Activated CD4-positive, alpha-beta T cell treated with anti-CD3 and anti-CD28 coated beads, Interleukin-2, amount 10 ng/mL, durations not matched to agents 24 days and 14 days (primary cell): ENCODE measurements at regions of chr9 and their contacts with region 1.

Region 1: GRCh38 chr9:19127881-19128500 is 699 bp upstream of the PLIN2 start:
- DNase-seq: peak; percentile 80
- H3K4me3 Mint-ChIP-seq: peak overlapping the region; percentile 90
- H3K27ac Mint-ChIP-seq: peak overlapping the region; percentile 95
- H3K4me1 Mint-ChIP-seq: peaks cover 46% of the 10 kb centered on the region
- H3K27me3 Mint-ChIP-seq: no peaks in the 10 kb centered on the region

Region 2: GRCh38 chr9:18985464-18985951 is 142.5 kb before region 1 on chr9:
- intact Hi-C with region 1: no loop called
- DNase-seq: no peak
- H3K4me3 Mint-ChIP-seq: no peak overlapping the region
- H3K27ac Mint-ChIP-seq: no peak overlapping the region
- H3K4me1 Mint-ChIP-seq: no peaks in the 10 kb centered on the region
- H3K27me3 Mint-ChIP-seq: no peaks in the 10 kb centered on the region

Region 3: GRCh38 chr9:19048966-19049916 is 78.8 kb before region 1 on chr9 and contains the start of gene RRAGA:
- intact Hi-C with region 1: loop called (anchors 1 kb)
- DNase-seq: peak; percentile 99
- H3K4me3 Mint-ChIP-seq: peak within 1 kb of the TSS; percentile 95
- H3K27ac Mint-ChIP-seq: peak within 1 kb of the TSS; percentile 99
- H3K4me1 Mint-ChIP-seq: peaks cover 32% of the 10 kb centered on the region
- H3K27me3 Mint-ChIP-seq: no peaks in the 10 kb centered on the region
- total RNA-seq, gene RRAGA: 54.1 and 54.3 TPM in 2 replicates

Region 4: GRCh38 chr9:19161257-19162025 is 33.5 kb after region 1 on chr9:
- intact Hi-C with region 1: loop called (anchors 1 kb)
- DNase-seq: peak; percentile 86
- H3K4me3 Mint-ChIP-seq: peak overlapping the region; percentile 67
- H3K27ac Mint-ChIP-seq: peak overlapping the region; percentile 89
- H3K4me1 Mint-ChIP-seq: peaks cover 24% of the 10 kb centered on the region
- H3K27me3 Mint-ChIP-seq: no peaks in the 10 kb centered on the region

Region 5: GRCh38 chr9:19174127-19174912 is 46.3 kb after region 1 on chr9:
- intact Hi-C with region 1: loop called (anchors 1 kb)
- DNase-seq: peak; percentile 80
- H3K4me3 Mint-ChIP-seq: peak overlapping the region; percentile 22
- H3K27ac Mint-ChIP-seq: peak overlapping the region; percentile 34
- H3K4me1 Mint-ChIP-seq: peaks cover 21% of the 10 kb centered on the region
- H3K27me3 Mint-ChIP-seq: no peaks in the 10 kb centered on the region

Region 6: DNA sequence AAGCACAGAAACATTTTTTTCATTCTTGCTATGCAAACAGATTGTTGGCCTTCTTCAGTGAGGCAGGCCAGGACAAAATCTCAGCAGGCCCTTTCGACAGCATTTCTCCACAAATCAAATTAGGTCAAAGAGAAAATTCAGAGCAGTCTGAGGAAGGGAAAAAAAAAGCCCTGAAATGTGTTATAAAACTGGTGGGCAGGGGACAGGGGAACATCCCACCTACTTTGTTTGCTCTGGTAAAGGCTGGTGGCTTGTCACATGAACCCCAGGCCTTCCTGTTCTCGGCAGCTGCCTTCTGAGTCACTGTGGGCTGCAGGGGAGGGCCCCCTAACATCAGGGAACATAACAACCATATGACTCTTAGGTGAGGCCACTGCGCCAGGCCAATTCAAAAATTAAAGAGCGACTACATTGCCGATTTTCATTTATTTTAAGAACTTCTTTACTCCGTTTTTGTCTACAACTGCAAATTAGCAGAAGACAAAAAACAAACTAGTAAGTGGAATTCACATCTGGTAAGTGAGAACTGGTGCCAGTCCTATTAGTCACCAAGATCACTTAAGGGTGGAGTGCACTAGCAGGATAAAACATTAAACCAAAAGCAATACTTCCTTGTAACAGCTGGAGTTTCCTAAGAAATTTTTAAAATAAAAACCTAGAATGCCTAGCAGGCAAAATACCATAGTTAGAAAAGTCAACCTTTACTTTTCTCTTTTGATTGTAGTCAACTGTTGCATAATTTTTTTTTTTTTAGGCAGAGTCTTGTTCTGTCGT is 56.3 kb after region 1 on chr9:
- intact Hi-C with region 1: loop called (anchors 1 kb)
- DNase-seq: peak; percentile 91
- H3K4me3 Mint-ChIP-seq: peak overlapping the region; percentile 75
- H3K27ac Mint-ChIP-seq: peak overlapping the region; percentile 90
- H3K4me1 Mint-ChIP-seq: peaks cover 19% of the 10 kb centered on the region
- H3K27me3 Mint-ChIP-seq: no peaks in the 10 kb centered on the region

Region 7: DNA sequence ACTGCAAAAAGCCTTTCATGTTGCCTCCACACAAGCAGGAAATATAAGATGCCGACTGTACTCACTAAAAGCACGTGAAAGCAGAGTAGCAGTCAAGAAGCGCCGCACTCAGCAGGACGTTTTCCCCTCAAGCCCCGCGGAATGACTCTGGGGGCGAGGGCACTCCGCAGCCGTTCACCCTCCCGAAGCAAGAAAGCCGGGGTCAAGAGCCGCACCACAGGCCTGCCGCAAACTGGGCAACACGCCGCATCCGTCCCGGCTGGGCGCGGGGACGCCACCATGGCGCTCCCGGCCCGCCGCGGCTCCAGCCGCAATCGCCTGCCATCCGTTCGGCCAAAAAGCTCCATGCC is 251.7 kb after region 1 on chr9:
- intact Hi-C with region 1: loop called (anchors 1 kb)
- DNase-seq: no peak
- H3K4me3 Mint-ChIP-seq: peak overlapping the region; percentile 95
- H3K27ac Mint-ChIP-seq: peak overlapping the region; percentile 95
- H3K4me1 Mint-ChIP-seq: peaks cover 45% of the 10 kb centered on the region
- H3K27me3 Mint-ChIP-seq: no peaks in the 10 kb centered on the region